ENCODE measurements at regions of chr5 and their contacts with region 1.

Region 1: DNA sequence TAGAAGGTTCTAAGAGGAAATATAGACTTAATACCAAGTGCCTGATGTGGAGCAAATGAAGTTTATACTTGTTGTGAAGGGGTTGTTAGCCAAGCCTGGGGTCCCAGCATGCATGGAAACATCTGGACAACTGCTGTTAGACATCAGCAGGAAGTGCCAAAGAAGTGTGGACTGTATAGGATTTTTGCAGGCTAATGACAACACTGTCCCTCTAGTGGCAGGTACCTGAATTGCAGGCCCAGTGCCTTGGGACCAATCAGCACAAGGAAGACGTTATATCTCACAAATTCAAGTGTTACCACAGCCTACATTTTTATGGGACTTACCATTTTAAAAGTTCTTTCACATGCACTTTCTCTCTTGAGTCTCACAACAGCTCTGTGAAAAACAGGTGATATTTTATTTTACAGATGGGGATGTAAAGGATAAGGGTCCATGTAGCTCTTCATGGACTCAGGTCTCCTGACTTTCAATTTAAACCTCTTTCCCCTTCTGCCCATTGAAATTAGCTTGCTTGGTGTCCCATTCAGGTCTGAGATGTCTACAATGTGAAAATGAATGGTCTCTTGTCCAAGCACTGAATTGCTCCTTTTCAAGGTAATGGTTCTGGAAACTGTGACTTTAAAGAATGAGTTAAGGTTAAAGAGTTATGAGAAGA is 89.0 kb upstream of the MAP1B start:
- DNase-seq: peak; percentile 62 to 65
- H3K4me3 ChIP-seq: no peak overlapping the region
- H3K27ac ChIP-seq: no peak overlapping the region
- H3K4me1 ChIP-seq: peaks cover 0 to 16% (median 4%) of the 10 kb centered on the region in 4 donors
- H3K27me3 ChIP-seq: peaks cover 0 to 12% (median 0%) of the 10 kb centered on the region in 3 donors
- CTCF ChIP-seq: peak in 6 of 7 experiments; percentile 28 to 92 (median 87)
- EP300 ChIP-seq: no peak
- POLR2A ChIP-seq: no peak

Region 2: DNA sequence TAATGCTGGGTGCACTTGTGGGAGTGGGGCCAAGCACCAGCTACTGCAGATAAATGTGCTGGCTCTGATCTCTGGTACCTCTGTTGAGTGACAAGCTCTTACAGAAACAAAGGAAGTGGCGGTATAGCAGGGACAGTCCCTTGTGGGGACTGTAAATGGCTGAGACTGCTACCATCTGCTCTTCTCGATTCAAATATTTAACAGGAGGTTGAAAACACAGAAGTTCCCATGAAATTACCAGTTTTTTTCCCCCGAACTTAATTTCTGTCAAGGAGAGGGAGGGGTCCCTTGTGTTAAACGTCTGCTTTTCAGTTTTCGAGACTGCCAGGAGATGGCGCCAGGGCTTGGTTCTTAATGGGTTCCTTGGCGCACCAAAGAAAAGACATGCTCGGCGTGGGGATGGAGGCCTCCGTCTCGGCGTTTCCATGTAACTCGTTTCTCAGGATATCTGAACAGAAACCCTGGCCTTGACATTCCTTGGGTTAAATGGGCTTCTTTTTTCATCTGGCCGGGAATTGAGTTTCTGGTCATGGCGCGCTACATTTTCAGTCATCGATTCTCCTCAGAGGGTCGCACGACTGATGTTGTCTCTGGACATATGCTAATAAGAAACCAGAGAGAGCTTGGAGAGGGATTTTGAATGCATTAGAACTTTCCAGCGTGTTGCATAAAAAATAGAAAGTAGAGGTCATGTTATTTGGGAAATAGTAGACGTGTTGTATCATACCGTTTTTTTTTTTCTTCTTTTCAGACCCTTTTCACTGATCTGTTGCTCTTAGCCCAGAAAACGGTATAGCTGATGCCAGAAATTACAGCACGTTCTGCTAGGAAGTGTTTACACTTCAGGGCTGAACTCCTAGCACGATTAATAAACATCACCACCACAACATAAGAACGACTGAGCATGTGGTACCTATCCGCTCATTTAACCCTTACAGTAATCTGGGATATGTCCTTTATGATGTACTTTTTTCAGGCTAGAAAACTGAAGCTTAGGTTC is 235.2 kb before region 1 on chr5:
- intact Hi-C with region 1: loop called (anchors 5 kb)
- DNase-seq: peak; percentile 69 to 93
- H3K4me3 ChIP-seq: peak overlapping the region; percentile 12 to 36 (median 26)
- H3K27ac ChIP-seq: peak overlapping the region; percentile 30 to 81 (median 47)
- H3K4me1 ChIP-seq: peaks cover 0 to 22% (median 16%) of the 10 kb centered on the region in 4 donors
- H3K27me3 ChIP-seq: no peaks in the 10 kb centered on the region
- CTCF ChIP-seq: peak in 5 of 7 experiments; percentile 31 to 69 (median 56)
- EP300 ChIP-seq: no peak
- POLR2A ChIP-seq: no peak

Measured in stomach (tissue), 19 donors.